Endothelial cell of umbilical vein (primary cell): ENCODE measurements at regions of chr11 and their contacts with region 1.

Region 1: DNA sequence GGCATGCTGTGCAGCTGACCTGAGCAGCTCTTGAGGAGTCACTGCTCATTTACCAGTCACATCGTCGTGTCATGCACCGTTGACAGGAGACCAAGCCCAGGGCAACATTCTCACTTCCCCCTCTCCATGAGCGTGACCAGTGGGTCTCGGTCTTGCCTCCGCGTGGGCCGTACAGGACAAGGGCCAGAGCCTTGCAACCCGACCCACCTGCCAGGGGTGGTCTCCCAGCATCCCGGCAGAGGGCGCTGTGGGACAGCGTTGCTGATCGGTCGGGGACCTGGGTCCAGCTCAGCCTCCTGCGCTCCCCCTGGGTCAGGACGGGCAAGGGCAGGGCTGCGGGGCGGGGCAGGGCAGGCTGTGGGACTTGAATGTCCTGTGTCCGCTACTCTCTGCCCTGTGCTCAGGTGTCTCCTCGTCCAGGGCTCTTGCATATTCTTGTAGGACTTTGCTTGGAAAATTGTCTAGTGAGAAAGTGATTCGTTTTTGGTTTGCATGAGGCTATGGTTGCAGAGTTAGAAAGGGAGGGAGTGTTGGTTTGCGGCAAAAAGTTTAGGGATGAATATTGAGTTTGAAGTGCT is 16.2 kb downstream of the EIF4G2 start:
- DNase-seq: peak; percentile 69
- H3K4me3 ChIP-seq: no peak overlapping the region
- H3K27ac ChIP-seq: no peak overlapping the region
- H3K4me1 ChIP-seq: no peaks in the 10 kb centered on the region
- H3K27me3 ChIP-seq: no peaks in the 10 kb centered on the region
- CTCF ChIP-seq: peak; percentile 97 to 98
- POLR2A ChIP-seq: no peak

Region 2: GRCh38 chr11:10657308-10658271 is 134.9 kb before region 1 on chr11:
- CTCF ChIA-PET with region 1: no interaction called
- POLR2A ChIA-PET with region 1: no interaction called
- dilution Hi-C with region 1: no loop called
- intact Hi-C with region 1: no loop called
- DNase-seq: peak; percentile 54
- H3K4me3 ChIP-seq: no peak overlapping the region
- H3K27ac ChIP-seq: peak overlapping the region; percentile 67
- H3K4me1 ChIP-seq: peaks cover 34% of the 10 kb centered on the region
- H3K27me3 ChIP-seq: no peaks in the 10 kb centered on the region
- CTCF ChIP-seq: no peak
- POLR2A ChIP-seq: no peak

Region 3: GRCh38 chr11:10722307-10722706 is 70.2 kb before region 1 on chr11:
- CTCF ChIA-PET with region 1: no interaction called
- POLR2A ChIA-PET with region 1: no interaction called
- dilution Hi-C with region 1: no loop called
- intact Hi-C with region 1: no loop called
- DNase-seq: no peak
- H3K4me3 ChIP-seq: no peak overlapping the region
- H3K27ac ChIP-seq: no peak overlapping the region
- H3K4me1 ChIP-seq: no peaks in the 10 kb centered on the region
- H3K27me3 ChIP-seq: peaks cover 2 to 12% of the 10 kb centered on the region in 2 experiments
- CTCF ChIP-seq: no peak
- POLR2A ChIP-seq: no peak

Region 4: GRCh38 chr11:10803676-10804075 is 11.2 kb after region 1 on chr11:
- CTCF ChIA-PET with region 1: interaction called, 17 read pairs
- POLR2A ChIA-PET with region 1: interaction called, 47 read pairs
- dilution Hi-C with region 1: no loop called
- intact Hi-C with region 1: no loop called
- DNase-seq: no peak
- H3K4me3 ChIP-seq: no peak overlapping the region
- H3K27ac ChIP-seq: no peak overlapping the region
- H3K4me1 ChIP-seq: peaks cover 39% of the 10 kb centered on the region
- H3K27me3 ChIP-seq: no peaks in the 10 kb centered on the region
- CTCF ChIP-seq: no peak
- POLR2A ChIP-seq: no peak

Region 5: GRCh38 chr11:10878408-10879214 is 86.1 kb after region 1 on chr11:
- CTCF ChIA-PET with region 1: interaction called, 11 read pairs
- POLR2A ChIA-PET with region 1: no interaction called
- dilution Hi-C with region 1: no loop called
- intact Hi-C with region 1: no loop called
- DNase-seq: peak; percentile 69
- H3K4me3 ChIP-seq: no peak overlapping the region
- H3K27ac ChIP-seq: no peak overlapping the region
- H3K4me1 ChIP-seq: no peaks in the 10 kb centered on the region
- H3K27me3 ChIP-seq: no peaks in the 10 kb centered on the region
- CTCF ChIP-seq: peak; percentile 68 to 77
- POLR2A ChIP-seq: no peak

Region 6: DNA sequence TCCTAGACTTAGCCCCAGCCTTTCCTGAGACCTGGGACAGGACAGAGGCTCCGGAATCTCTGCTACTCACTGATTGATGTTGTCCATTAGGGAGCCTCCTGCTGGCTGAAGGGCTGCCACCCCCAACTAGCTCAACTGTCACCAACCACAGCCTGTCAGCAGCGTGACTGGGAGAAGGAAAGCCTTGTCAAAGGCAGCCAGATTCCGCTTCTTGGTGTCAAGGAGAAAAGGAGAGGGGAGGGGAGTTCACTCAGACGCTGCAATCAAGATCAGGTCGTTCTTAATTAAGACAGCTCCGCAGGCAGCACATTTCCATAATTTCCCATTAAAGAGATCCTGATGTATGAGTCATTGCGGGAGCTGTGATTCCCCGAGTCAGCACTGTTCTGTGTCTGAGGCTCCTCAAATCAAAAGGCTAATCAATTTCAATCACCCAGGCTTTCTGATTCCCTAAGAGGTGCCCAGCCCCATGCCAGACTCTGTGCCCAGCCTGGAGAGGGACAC is 218.2 kb after region 1 on chr11:
- CTCF ChIA-PET with region 1: interaction called, 25 read pairs
- POLR2A ChIA-PET with region 1: no interaction called
- dilution Hi-C with region 1: no loop called
- intact Hi-C with region 1: no loop called
- DNase-seq: peak; percentile 23
- H3K4me3 ChIP-seq: no peak overlapping the region
- H3K27ac ChIP-seq: no peak overlapping the region
- H3K4me1 ChIP-seq: no peaks in the 10 kb centered on the region
- H3K27me3 ChIP-seq: peaks cover 15 to 36% of the 10 kb centered on the region in 2 experiments
- CTCF ChIP-seq: peak; percentile 12 to 36
- POLR2A ChIP-seq: no peak

Region 7: DNA sequence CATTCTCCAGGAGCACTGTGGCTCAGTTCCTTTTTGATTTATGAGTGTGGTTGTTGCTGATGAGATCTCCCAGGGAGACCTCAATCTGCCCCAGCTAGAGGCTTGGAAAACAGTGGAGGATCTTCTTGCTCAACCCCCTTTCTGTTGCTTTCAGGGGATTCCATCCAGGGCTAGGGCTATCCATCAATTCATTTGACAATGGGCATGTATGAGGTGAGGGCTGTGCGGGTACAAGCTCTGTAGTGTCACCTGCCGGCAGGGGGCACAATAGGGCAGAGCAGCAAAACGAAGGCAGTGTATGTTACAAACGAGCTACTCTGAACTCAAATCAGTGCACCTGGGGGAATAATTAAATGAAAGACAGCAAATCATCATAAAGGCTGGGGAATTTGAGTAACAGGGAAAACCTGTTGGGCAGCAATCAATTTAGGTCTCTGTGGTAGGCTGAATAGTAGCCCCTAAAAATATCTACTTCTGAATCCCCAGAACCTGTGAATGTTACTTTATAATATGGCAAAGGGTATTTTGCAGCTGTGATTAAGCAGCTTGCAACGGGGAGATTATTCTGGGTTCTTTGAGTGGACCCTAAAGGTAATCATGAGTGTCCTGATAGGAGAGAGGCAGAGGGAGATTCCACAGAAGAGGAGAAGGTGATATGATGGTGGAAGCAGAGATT is 235.7 kb after region 1 on chr11:
- CTCF ChIA-PET with region 1: interaction called, 56 read pairs
- POLR2A ChIA-PET with region 1: no interaction called
- dilution Hi-C with region 1: no loop called
- intact Hi-C with region 1: no loop called
- DNase-seq: peak; percentile 52
- H3K4me3 ChIP-seq: no peak overlapping the region
- H3K27ac ChIP-seq: no peak overlapping the region
- H3K4me1 ChIP-seq: peaks cover 8% of the 10 kb centered on the region
- H3K27me3 ChIP-seq: peaks cover 4 to 6% of the 10 kb centered on the region in 2 experiments
- CTCF ChIP-seq: peak; percentile 70 to 81
- POLR2A ChIP-seq: no peak